CD8-positive, alpha-beta T cell (primary cell): ENCODE measurements at regions of chr17 and their contacts with region 1.

Region 1: GRCh38 chr17:43024407-43025289 is at the start of gene RND2:
- DNase-seq: peak; percentile 56 to 90 (median 81)
- ATAC-seq: peak; percentile 67
- H3K4me3 ChIP-seq: peak within 1 kb of the TSS; percentile 70 to 99
- H3K4me3 Mint-ChIP-seq: peak within 1 kb of the TSS; percentile 90
- H3K27ac ChIP-seq: peak within 1 kb of the TSS; percentile 1 to 72
- H3K27ac Mint-ChIP-seq: peak within 1 kb of the TSS; percentile 83
- H3K4me1 ChIP-seq: peaks cover 22% of the 10 kb centered on the region
- H3K4me1 Mint-ChIP-seq: peaks cover 26% of the 10 kb centered on the region
- H3K27me3 ChIP-seq: no peaks in the 10 kb centered on the region
- H3K27me3 Mint-ChIP-seq: no peaks in the 10 kb centered on the region
- CTCF ChIP-seq: peak; percentile 45
- total RNA-seq, gene RND2: 0.30 TPM in 1 of 2 experiments, not detected in the other

Region 2: GRCh38 chr17:42964161-42964932 is 60.3 kb before region 1 on chr17 and contains the start of gene AARSD1:
- CTCF ChIA-PET with region 1: no interaction called
- POLR2A ChIA-PET with region 1: no interaction called
- intact Hi-C with region 1: loop called (anchors 1 to 2 kb)
- DNase-seq: peak; percentile 80 to 96 (median 88)
- ATAC-seq: peak; percentile 99
- H3K4me3 ChIP-seq: peak within 1 kb of the TSS; percentile 48 to 86
- H3K4me3 Mint-ChIP-seq: peak within 1 kb of the TSS; percentile 87
- H3K27ac ChIP-seq: peak within 1 kb of the TSS; percentile 63 to 82
- H3K27ac Mint-ChIP-seq: peak within 1 kb of the TSS; percentile 84
- H3K4me1 ChIP-seq: peaks cover 7% of the 10 kb centered on the region
- H3K4me1 Mint-ChIP-seq: peaks cover 19% of the 10 kb centered on the region
- H3K27me3 ChIP-seq: no peaks in the 10 kb centered on the region
- H3K27me3 Mint-ChIP-seq: no peaks in the 10 kb centered on the region
- CTCF ChIP-seq: no peak
- total RNA-seq, gene AARSD1: 75.1 to 87.6 TPM

Region 3: GRCh38 chr17:43211480-43212402 is 187.1 kb after region 1 on chr17 and contains the start of gene TMEM106A:
- CTCF ChIA-PET with region 1: no interaction called
- POLR2A ChIA-PET with region 1: interaction called, 3 read pairs
- intact Hi-C with region 1: loop called in 1 of 2 experiments (anchors 10 kb)
- DNase-seq: peak; percentile 50 to 89 (median 76)
- ATAC-seq: peak; percentile 92
- H3K4me3 ChIP-seq: peak within 1 kb of the TSS; percentile 82 to 95
- H3K4me3 Mint-ChIP-seq: peak within 1 kb of the TSS; percentile 98
- H3K27ac ChIP-seq: peak within 1 kb of the TSS; percentile 75 to 82
- H3K27ac Mint-ChIP-seq: peak within 1 kb of the TSS; percentile 96
- H3K4me1 ChIP-seq: peaks cover 25% of the 10 kb centered on the region
- H3K4me1 Mint-ChIP-seq: peaks cover 40% of the 10 kb centered on the region
- H3K27me3 ChIP-seq: no peaks in the 10 kb centered on the region
- H3K27me3 Mint-ChIP-seq: no peaks in the 10 kb centered on the region
- CTCF ChIP-seq: peak; percentile 58
- total RNA-seq, gene TMEM106A: 8.9 to 9.2 TPM

Region 4: DNA sequence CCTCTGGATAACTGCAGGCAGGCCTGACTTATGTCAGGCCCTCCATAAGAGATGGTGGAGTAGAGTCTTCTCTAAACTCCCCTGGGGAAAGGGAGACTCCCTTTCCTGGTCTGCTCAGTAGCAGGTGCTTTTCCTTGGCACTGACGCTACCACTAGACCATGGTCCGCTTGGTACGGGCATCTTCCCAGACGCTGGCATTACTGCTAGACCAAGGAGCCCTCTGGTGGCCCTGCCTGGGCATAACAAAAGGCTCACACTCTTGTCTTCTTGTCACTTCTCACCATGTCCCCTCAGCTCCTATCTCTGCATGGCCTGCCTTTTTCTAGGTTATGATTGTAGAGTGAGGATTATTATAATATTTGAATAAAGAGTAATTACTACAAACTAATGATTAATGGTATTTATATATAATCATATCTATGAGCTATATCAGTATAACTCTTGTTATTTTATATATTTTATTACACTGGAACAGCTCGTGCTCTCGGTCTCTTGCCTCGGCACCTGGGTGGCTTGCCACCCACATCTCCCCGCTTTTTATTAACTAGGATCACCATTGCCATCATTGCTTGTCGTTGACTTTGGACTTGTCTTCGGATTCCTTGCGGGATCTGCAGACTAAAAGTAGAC is 314.4 kb after region 1 on chr17:
- CTCF ChIA-PET with region 1: interaction called, 8 read pairs
- POLR2A ChIA-PET with region 1: no interaction called
- intact Hi-C with region 1: loop called (anchors 5 kb)
- DNase-seq: peak; percentile 32 to 78 (median 62)
- ATAC-seq: peak; percentile 36
- H3K4me3 ChIP-seq: no peak overlapping the region
- H3K4me3 Mint-ChIP-seq: no peak overlapping the region
- H3K27ac ChIP-seq: no peak overlapping the region
- H3K27ac Mint-ChIP-seq: no peak overlapping the region
- H3K4me1 ChIP-seq: peaks cover 6% of the 10 kb centered on the region
- H3K4me1 Mint-ChIP-seq: peaks cover 8% of the 10 kb centered on the region
- H3K27me3 ChIP-seq: no peaks in the 10 kb centered on the region
- H3K27me3 Mint-ChIP-seq: no peaks in the 10 kb centered on the region
- CTCF ChIP-seq: peak; percentile 69

Region 5: DNA sequence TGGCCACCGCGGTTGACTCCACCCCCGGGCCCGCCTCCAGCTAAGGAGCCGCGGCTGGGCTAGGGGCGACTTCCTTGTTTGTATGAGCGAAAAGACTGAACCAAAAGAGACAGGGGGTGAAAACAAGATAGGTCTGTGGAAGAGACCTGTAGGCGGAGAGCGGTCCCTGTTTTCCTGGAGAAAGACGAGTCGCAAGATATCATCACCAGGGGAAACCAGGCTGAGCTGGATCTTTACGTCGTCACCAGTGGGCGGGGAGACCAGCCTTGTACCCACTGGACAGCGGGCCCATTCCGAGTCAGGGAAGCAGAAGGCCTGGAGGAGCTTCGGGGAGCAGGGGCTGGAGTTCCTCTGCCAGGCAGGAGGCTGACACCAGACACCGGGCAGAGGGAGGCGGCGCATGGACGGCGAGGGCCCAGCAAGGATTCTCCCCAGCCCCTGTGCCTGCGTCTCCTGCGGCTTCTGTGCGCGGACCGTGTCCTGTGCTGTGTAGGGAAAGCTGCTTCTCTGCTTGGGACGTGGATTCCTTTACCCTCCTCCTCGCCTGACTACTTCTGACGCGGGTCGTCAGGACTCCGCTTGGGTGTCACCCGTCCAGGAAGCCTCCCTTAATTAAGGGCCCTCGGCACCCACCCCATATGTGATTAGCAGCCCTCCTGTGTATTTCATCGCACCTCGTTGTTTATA is 363.9 kb after region 1 on chr17:
- CTCF ChIA-PET with region 1: no interaction called
- POLR2A ChIA-PET with region 1: no interaction called
- intact Hi-C with region 1: loop called (anchors 2 to 10 kb)
- DNase-seq: peak; percentile 88 to 96 (median 90)
- ATAC-seq: peak; percentile 71
- H3K4me3 ChIP-seq: peak overlapping the region; percentile 74 to 94
- H3K4me3 Mint-ChIP-seq: peak overlapping the region; percentile 89
- H3K27ac ChIP-seq: peak overlapping the region; percentile 94 to 96
- H3K27ac Mint-ChIP-seq: peak overlapping the region; percentile 97
- H3K4me1 ChIP-seq: peaks cover 14% of the 10 kb centered on the region
- H3K4me1 Mint-ChIP-seq: peaks cover 37% of the 10 kb centered on the region
- H3K27me3 ChIP-seq: no peaks in the 10 kb centered on the region
- H3K27me3 Mint-ChIP-seq: no peaks in the 10 kb centered on the region
- CTCF ChIP-seq: no peak